Panc1 (cell line): ENCODE measurements at regions of chr21 and their contacts with region 1.

Region 1: GRCh38 chr21:39518138-39518846 is 66.5 kb downstream of the SH3BGR start:
- DNase-seq: peak; percentile 7
- ATAC-seq: peak; percentile 91
- H3K4me3 ChIP-seq: no peak overlapping the region
- H3K27ac ChIP-seq: no peak overlapping the region
- H3K4me1 ChIP-seq: no peaks in the 10 kb centered on the region
- H3K27me3 ChIP-seq: no peaks in the 10 kb centered on the region
- CTCF ChIP-seq: peak; percentile 83

Region 2: DNA sequence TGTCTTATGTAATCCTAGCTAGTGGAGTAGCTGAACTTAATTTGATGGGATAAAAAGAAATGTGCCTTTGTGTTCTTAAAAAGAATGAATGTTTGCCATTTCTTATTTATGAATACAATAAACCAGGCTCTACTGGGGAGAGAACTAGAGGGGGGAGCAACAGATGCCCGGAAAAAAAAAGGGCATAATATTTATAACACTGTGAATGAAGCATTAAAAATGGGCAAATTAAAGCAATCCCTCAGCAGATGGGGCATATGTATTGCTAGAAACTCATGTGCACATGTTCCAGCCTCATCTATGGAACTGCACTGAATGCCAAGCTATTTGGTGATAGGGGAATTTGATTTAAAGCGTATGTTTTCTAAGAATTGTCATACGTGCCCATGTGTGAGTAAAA is 1559.8 kb before region 1 on chr21:
- CTCF ChIA-PET with region 1: no interaction called
- POLR2A ChIA-PET with region 1: no interaction called
- in situ Hi-C with region 1: no loop called
- intact Hi-C with region 1: no loop called
- DNase-seq: no peak
- ATAC-seq: no peak
- H3K4me3 ChIP-seq: no peak overlapping the region
- H3K27ac ChIP-seq: no peak overlapping the region
- H3K4me1 ChIP-seq: no peaks in the 10 kb centered on the region
- H3K27me3 ChIP-seq: peaks cover 2% of the 10 kb centered on the region; the same call in 1 of the 2 replicates
- CTCF ChIP-seq: no peak

Region 3: DNA sequence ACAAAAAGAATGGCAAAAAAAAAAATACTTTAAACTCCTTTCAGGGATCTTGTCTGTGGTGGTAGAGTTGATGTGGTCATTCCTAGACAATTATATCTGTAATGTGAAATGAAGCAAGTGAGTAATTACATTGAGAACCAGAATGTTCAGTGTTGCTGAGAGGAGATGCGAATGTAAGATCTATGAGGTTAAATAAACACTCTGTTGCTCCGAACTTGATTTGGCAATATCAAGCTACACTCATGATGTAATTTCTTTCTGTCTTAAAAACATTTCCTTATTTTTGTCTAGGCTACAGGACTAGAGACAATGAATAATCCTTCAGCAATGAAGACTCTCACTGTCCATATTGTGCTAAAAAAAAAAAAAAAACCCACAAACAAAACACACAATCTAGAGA is 163.5 kb after region 1 on chr21:
- CTCF ChIA-PET with region 1: no interaction called
- POLR2A ChIA-PET with region 1: no interaction called
- in situ Hi-C with region 1: no loop called
- intact Hi-C with region 1: no loop called
- DNase-seq: no peak
- ATAC-seq: no peak
- H3K4me3 ChIP-seq: no peak overlapping the region
- H3K27ac ChIP-seq: no peak overlapping the region
- H3K4me1 ChIP-seq: no peaks in the 10 kb centered on the region
- H3K27me3 ChIP-seq: no peaks in the 10 kb centered on the region
- CTCF ChIP-seq: no peak

Region 4: DNA sequence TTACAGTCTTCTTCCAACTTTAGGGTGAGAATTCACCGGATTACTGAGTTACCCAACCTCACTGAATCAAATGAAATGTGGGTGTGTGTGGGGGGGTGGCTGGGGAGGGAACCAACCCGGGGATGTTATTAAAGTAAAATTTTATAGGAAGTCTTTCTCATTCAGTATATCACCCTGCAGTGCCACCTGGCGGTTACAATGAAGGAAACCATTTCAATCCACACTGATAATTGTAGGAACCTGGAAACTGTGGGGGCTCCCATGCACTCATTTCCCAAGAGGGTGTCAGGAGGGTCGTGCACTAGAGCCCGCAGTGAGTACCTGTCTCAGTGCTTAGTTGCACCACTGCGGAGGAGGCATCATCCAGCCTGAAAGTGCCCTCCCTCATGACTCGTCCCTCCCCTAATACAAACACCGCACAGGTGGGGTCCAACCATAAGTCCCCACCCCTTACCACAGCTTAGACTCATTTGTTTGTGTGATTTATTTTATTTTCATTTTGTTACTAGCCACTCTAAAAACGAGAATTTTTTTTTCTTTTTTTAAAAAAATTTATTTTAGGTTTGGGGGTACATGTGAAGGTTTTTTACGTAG is 197.6 kb after region 1 on chr21:
- CTCF ChIA-PET with region 1: interaction called, 15 read pairs
- POLR2A ChIA-PET with region 1: no interaction called
- in situ Hi-C with region 1: no loop called
- intact Hi-C with region 1: loop called (anchors 1 kb)
- DNase-seq: no peak
- ATAC-seq: peak; percentile 72; the same call in 1 of the 2 replicates
- H3K4me3 ChIP-seq: no peak overlapping the region
- H3K27ac ChIP-seq: no peak overlapping the region
- H3K4me1 ChIP-seq: no peaks in the 10 kb centered on the region
- H3K27me3 ChIP-seq: no peaks in the 10 kb centered on the region
- CTCF ChIP-seq: peak; percentile 71